SK-N-SH (cell line): ENCODE measurements at regions of chr10 and their contacts with region 1.

Region 1: DNA sequence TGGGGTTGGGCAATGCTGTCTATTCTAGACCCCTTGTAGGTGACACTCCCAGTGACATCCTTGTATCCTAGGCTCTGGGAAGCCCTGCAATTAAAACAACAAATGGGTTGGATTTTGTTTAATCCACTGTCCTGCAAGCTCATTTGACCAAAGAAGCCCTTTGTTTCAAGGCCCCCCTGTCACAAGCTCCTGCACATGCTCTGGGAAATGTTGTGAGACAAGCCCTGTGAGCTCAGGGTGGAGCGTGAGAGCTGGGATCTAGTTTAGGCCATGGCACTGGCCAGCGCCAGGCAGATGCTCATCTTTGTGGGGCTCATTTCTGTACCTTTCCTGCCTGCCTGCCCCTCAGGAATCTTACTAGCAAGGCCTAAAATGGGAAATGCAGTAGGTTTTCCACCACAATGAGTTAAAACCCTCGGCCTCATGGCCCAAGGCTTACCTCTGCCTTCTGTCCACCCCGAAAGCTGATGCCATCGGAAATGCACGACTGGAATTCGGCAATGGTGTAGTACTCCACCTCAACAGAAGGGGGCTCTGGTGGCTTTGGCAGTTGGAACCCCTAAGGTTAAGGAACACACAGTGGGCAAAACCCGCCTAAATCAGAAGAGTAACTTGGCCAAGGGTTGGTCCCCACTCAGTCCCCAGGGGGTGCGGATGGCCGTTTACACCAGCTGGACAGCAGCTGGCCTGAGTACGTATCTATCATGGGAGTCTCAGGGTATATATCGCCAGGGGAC is 112.0 kb downstream of the NEURL1 start:
- DNase-seq: peak; percentile 79
- H3K4me3 ChIP-seq: no peak overlapping the region
- H3K27ac ChIP-seq: peak overlapping the region in 1 of 2 experiments; percentile 1; a peak in 1 of 4 replicates
- H3K4me1 ChIP-seq: peaks cover 0 to 25% of the 10 kb centered on the region in 2 experiments; a peak in 2 of 4 replicates
- H3K27me3 ChIP-seq: no peaks in the 10 kb centered on the region
- CTCF ChIP-seq: peak; percentile 72
- EP300 ChIP-seq: no peak
- RAD21 ChIP-seq: peak; percentile 77

Region 2: GRCh38 chr10:103592186-103593021 is 13.1 kb before region 1 on chr10:
- CTCF ChIA-PET with region 1: interaction called, 13 read pairs
- POLR2A ChIA-PET with region 1: no interaction called
- DNase-seq: peak; percentile 91
- H3K4me3 ChIP-seq: no peak overlapping the region; a peak in 1 of 4 replicates
- H3K27ac ChIP-seq: peak overlapping the region in 1 of 2 experiments; percentile 7; a peak in 1 of 4 replicates
- H3K4me1 ChIP-seq: peaks cover 0 to 15% of the 10 kb centered on the region in 2 experiments; a peak in 1 of 4 replicates
- H3K27me3 ChIP-seq: no peaks in the 10 kb centered on the region
- CTCF ChIP-seq: peak; percentile 71
- EP300 ChIP-seq: no peak
- RAD21 ChIP-seq: peak; percentile 79

Region 3: DNA sequence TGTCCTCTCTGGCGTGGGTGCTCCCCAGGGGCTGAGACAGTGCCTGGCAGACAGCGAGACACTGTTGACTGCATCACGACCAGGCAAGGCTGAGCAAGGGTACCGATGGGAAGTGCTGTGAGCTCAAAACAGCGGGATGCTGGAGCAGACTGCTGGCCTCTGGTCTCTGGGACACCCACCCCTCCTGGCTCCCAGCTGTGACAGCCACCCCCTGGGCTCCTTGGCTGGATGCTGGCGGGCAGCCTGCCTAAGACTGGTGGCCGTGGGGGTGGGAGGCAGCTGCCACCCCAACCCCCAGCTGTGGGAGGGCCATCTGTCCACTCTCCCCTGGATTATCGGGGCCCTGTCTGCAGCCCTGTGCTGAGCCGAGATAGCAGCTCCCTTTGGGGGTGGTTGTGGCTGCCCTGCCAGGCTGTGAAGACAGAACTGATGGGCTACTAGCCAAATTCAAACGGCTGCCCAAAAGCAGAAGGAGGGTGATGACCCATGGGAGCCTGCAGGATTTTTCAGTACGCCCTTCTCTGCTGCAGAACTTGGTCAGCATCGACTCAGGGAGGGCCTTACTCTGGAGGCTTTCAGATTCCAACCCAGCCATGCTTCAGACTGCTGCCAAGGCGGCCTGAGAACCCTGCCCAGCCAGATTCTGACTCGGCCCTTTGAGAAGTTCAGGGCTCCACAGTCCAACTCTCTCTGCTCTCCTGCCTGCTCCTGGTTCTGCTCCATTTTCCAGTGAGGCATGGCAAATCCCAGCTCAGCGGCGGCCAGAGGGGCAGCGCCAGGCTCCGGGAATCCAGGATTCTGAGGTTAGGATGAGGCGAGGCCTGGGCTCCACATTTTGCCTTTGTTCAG is 13.3 kb after region 1 on chr10:
- CTCF ChIA-PET with region 1: interaction called, 26 read pairs
- POLR2A ChIA-PET with region 1: interaction called, 6 read pairs
- DNase-seq: peak; percentile 95
- H3K4me3 ChIP-seq: no peak overlapping the region
- H3K27ac ChIP-seq: peak overlapping the region; percentile 50 to 99
- H3K4me1 ChIP-seq: peaks cover 6 to 94% of the 10 kb centered on the region in 2 experiments; a peak in 3 of 4 replicates
- H3K27me3 ChIP-seq: no peaks in the 10 kb centered on the region
- CTCF ChIP-seq: no peak
- EP300 ChIP-seq: peak in 1 of 2 experiments; percentile 98; a peak in 2 of 4 replicates
- RAD21 ChIP-seq: no peak; the same call in 1 of the 2 replicates

Region 4: GRCh38 chr10:103626178-103626577 is 20.7 kb after region 1 on chr10:
- CTCF ChIA-PET with region 1: interaction called, 12 read pairs
- POLR2A ChIA-PET with region 1: no interaction called
- DNase-seq: no peak
- H3K4me3 ChIP-seq: no peak overlapping the region
- H3K27ac ChIP-seq: no peak overlapping the region; a peak in 1 of 4 replicates
- H3K4me1 ChIP-seq: peaks cover 0 to 80% of the 10 kb centered on the region in 2 experiments; a peak in 2 of 4 replicates
- H3K27me3 ChIP-seq: no peaks in the 10 kb centered on the region
- CTCF ChIP-seq: no peak
- EP300 ChIP-seq: no peak
- RAD21 ChIP-seq: no peak

Region 5: DNA sequence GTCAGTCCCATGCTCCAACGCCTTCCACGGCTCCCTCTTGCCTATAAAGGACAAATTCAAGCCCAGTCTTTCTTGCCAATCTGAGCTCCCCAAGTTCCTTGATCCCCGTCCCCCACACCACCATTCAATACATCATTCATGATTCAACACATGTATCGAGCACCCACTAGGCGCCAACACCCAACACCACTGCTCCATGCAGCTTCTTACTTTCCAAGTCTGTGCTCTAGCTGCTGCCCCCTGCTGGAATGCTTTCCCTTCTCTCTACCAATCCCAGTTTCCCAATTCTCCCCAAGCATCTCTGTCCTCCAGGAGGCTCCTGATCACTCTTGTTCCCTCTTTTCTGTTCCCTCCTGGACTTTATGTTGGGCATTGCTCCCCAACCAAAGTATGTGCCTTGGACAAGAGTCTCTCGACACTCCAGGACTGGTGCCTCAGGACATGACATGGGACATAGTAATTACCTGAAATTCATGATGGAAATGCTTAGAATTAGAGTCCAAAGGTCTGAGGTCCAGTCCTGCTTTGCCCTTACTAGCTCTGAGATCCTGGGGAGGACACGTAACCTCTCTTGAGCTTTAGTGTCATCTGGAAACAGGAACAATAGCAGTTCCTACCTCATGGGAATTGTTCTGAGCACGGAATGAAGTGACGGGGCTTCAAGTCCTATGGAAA is 60.7 kb after region 1 on chr10:
- CTCF ChIA-PET with region 1: interaction called, 20 read pairs
- POLR2A ChIA-PET with region 1: no interaction called
- DNase-seq: peak; percentile 68
- H3K4me3 ChIP-seq: no peak overlapping the region
- H3K27ac ChIP-seq: no peak overlapping the region
- H3K4me1 ChIP-seq: peaks cover 0 to 7% of the 10 kb centered on the region in 2 experiments; a peak in 1 of 4 replicates
- H3K27me3 ChIP-seq: no peaks in the 10 kb centered on the region
- CTCF ChIP-seq: peak; percentile 56
- EP300 ChIP-seq: no peak
- RAD21 ChIP-seq: peak; percentile 46

Region 6: DNA sequence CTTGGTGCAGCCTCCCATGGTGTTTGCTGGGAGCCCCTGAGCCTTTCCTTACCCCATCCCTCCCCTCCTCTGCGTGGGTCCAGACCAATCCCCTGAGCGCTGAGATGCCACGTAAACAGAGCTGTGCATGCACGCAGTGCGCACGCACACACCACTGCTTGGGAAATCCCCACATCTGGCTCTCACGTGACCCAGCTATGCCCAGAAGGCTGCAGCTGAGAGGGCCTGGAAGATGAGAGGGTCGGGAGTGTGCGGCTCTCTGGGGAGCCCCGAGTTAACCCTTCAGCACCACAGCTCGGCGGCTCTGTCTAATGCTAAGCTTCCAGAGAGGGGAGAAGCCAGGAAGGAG is 72.6 kb after region 1 on chr10:
- CTCF ChIA-PET with region 1: interaction called, 14 read pairs
- POLR2A ChIA-PET with region 1: no interaction called
- DNase-seq: peak; percentile 94
- H3K4me3 ChIP-seq: no peak overlapping the region
- H3K27ac ChIP-seq: peak overlapping the region; percentile 70 to 77
- H3K4me1 ChIP-seq: peaks cover 0 to 22% of the 10 kb centered on the region in 2 experiments; a peak in 1 of 4 replicates
- H3K27me3 ChIP-seq: no peaks in the 10 kb centered on the region
- CTCF ChIP-seq: no peak
- EP300 ChIP-seq: peak in 1 of 2 experiments; percentile 55; a peak in 1 of 4 replicates
- RAD21 ChIP-seq: no peak